ENCODE measurements at regions of chr22 and their contacts with region 1.

Region 1: GRCh38 chr22:25110846-25111578 is 88.6 kb upstream of the CRYBB3 start:
- DNase-seq: peak; percentile 2 to 67 (median 53)
- H3K4me3 ChIP-seq: peak overlapping the region; percentile 61
- H3K4me3 Mint-ChIP-seq: peak overlapping the region; percentile 83 to 94 (median 90)
- H3K27ac ChIP-seq: no peak overlapping the region
- H3K27ac Mint-ChIP-seq: peak overlapping the region in 7 of 8 donors; percentile 3 to 97 (median 79)
- H3K4me1 ChIP-seq: peaks cover 13% of the 10 kb centered on the region
- H3K4me1 Mint-ChIP-seq: peaks cover 21 to 25% (median 23%) of the 10 kb centered on the region in 3 donors
- H3K27me3 ChIP-seq: no peaks in the 10 kb centered on the region
- H3K27me3 Mint-ChIP-seq: no peaks in the 10 kb centered on the region

Region 2: GRCh38 chr22:25054943-25055511 is 56.0 kb before region 1 on chr22:
- CTCF ChIA-PET with region 1: interaction called, 10 read pairs
- POLR2A ChIA-PET with region 1: interaction called, 3 read pairs
- DNase-seq: peak in 1 of 5 donors; percentile 37
- H3K4me3 ChIP-seq: no peak overlapping the region
- H3K4me3 Mint-ChIP-seq: peak overlapping the region in 1 of 7 donors; percentile 1
- H3K27ac ChIP-seq: no peak overlapping the region
- H3K27ac Mint-ChIP-seq: peak overlapping the region; percentile 3 to 89 (median 64)
- H3K4me1 ChIP-seq: no peaks in the 10 kb centered on the region
- H3K4me1 Mint-ChIP-seq: peaks cover 10 to 21% (median 14%) of the 10 kb centered on the region in 3 donors
- H3K27me3 ChIP-seq: no peaks in the 10 kb centered on the region
- H3K27me3 Mint-ChIP-seq: peaks cover 0 to 4% of the 10 kb centered on the region in 2 donors

Region 3: DNA sequence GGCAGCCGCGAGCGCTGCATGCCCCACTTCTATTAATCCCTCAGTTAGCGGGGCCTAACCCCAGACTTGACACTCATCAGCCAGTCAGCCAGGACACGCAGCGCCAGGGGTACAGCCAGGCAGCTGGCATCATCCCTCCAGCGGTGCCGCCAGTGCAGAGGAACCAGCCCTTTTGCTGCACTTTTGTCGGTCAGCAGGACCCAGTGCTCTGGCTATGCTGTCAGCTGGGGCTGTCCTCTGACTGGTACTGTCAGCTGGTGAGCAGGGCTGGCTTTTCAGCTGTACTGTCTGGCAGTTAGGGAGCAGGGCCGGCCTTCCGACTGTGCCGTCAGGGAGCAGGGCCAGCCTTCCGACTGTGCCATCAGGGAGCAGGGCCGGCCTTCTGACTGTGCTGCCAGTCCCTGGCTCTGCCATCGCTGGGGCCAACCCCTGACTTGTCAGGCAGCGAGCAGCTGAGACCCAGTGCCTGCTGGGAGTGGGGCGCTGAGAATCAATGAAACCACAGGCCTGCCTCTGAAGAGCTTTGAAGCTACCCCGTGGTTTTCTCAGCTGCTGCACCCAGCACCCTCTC is 43.1 kb before region 1 on chr22:
- CTCF ChIA-PET with region 1: interaction called, 16 read pairs
- POLR2A ChIA-PET with region 1: interaction called, 5 read pairs
- DNase-seq: peak; percentile 77 to 95 (median 92)
- H3K4me3 ChIP-seq: peak overlapping the region; percentile 29
- H3K4me3 Mint-ChIP-seq: peak overlapping the region; percentile 81 to 98 (median 92)
- H3K27ac ChIP-seq: peak overlapping the region; percentile 49
- H3K27ac Mint-ChIP-seq: peak overlapping the region; percentile 92 to 100 (median 98)
- H3K4me1 ChIP-seq: peaks cover 83% of the 10 kb centered on the region
- H3K4me1 Mint-ChIP-seq: peaks cover 78 to 96% (median 85%) of the 10 kb centered on the region in 3 donors
- H3K27me3 ChIP-seq: no peaks in the 10 kb centered on the region
- H3K27me3 Mint-ChIP-seq: no peaks in the 10 kb centered on the region

Region 4: GRCh38 chr22:25076336-25076735 is 34.7 kb before region 1 on chr22:
- CTCF ChIA-PET with region 1: interaction called, 22 read pairs
- POLR2A ChIA-PET with region 1: no interaction called
- DNase-seq: peak in 2 of 5 donors; percentile 48 to 61
- H3K4me3 ChIP-seq: no peak overlapping the region
- H3K4me3 Mint-ChIP-seq: peak overlapping the region; percentile 56 to 89 (median 81)
- H3K27ac ChIP-seq: peak overlapping the region; percentile 21
- H3K27ac Mint-ChIP-seq: peak overlapping the region; percentile 74 to 94 (median 91)
- H3K4me1 ChIP-seq: peaks cover 45% of the 10 kb centered on the region
- H3K4me1 Mint-ChIP-seq: peaks cover 64 to 84% (median 84%) of the 10 kb centered on the region in 3 donors
- H3K27me3 ChIP-seq: no peaks in the 10 kb centered on the region
- H3K27me3 Mint-ChIP-seq: no peaks in the 10 kb centered on the region

Region 5: GRCh38 chr22:25081409-25081824 is 29.6 kb before region 1 on chr22:
- CTCF ChIA-PET with region 1: interaction called, 22 read pairs
- POLR2A ChIA-PET with region 1: no interaction called
- DNase-seq: peak in 4 of 5 donors; percentile 22 to 66 (median 40)
- H3K4me3 ChIP-seq: no peak overlapping the region
- H3K4me3 Mint-ChIP-seq: peak overlapping the region in 1 of 7 donors; percentile 29
- H3K27ac ChIP-seq: no peak overlapping the region
- H3K27ac Mint-ChIP-seq: peak overlapping the region in 4 of 8 donors; percentile 66 to 81 (median 76)
- H3K4me1 ChIP-seq: peaks cover 35% of the 10 kb centered on the region
- H3K4me1 Mint-ChIP-seq: peaks cover 50 to 73% (median 70%) of the 10 kb centered on the region in 3 donors
- H3K27me3 ChIP-seq: no peaks in the 10 kb centered on the region
- H3K27me3 Mint-ChIP-seq: peaks cover 0 to 2% of the 10 kb centered on the region in 2 donors

Region 6: GRCh38 chr22:25125693-25126357 is 14.8 kb after region 1 on chr22:
- CTCF ChIA-PET with region 1: interaction called, 10 read pairs
- POLR2A ChIA-PET with region 1: no interaction called
- DNase-seq: no peak
- H3K4me3 ChIP-seq: no peak overlapping the region
- H3K4me3 Mint-ChIP-seq: no peak overlapping the region
- H3K27ac ChIP-seq: no peak overlapping the region
- H3K27ac Mint-ChIP-seq: no peak overlapping the region
- H3K4me1 ChIP-seq: no peaks in the 10 kb centered on the region
- H3K4me1 Mint-ChIP-seq: peaks cover 0 to 10% (median 3%) of the 10 kb centered on the region in 3 donors
- H3K27me3 ChIP-seq: no peaks in the 10 kb centered on the region
- H3K27me3 Mint-ChIP-seq: no peaks in the 10 kb centered on the region